Activated T-helper 1 cell treated with anti-CD3 and anti-CD28 coated beads, Interleukin-12 subunit alpha, Interleukin-12 subunit beta, Interleukin-2, Interleukin-4 antibody, amounts not matched to agents 30 ng/mL and 10 ng/mL and 1 ng/mL, durations not matched to agents 14 hours and 24 hours and 36 hours (primary cell): ENCODE measurements at regions of chr18 and their contacts with region 1.

Region 1: GRCh38 chr18:50099725-50100407 is 95.1 kb downstream of the MYO5B start:
- DNase-seq: no peak
- H3K4me3 Mint-ChIP-seq: no peak overlapping the region
- H3K27ac Mint-ChIP-seq: no peak overlapping the region
- H3K4me1 Mint-ChIP-seq: peaks cover 5% of the 10 kb centered on the region
- H3K27me3 Mint-ChIP-seq: peaks cover 14% of the 10 kb centered on the region

Region 2: GRCh38 chr18:50038448-50038847 is 61.4 kb before region 1 on chr18:
- intact Hi-C with region 1: loop called (anchors 10 kb)
- DNase-seq: no peak
- H3K4me3 Mint-ChIP-seq: no peak overlapping the region
- H3K27ac Mint-ChIP-seq: no peak overlapping the region
- H3K4me1 Mint-ChIP-seq: no peaks in the 10 kb centered on the region
- H3K27me3 Mint-ChIP-seq: peaks cover 16% of the 10 kb centered on the region